ENCODE measurements at regions of chr7 and their contacts with region 1.

Region 1: DNA sequence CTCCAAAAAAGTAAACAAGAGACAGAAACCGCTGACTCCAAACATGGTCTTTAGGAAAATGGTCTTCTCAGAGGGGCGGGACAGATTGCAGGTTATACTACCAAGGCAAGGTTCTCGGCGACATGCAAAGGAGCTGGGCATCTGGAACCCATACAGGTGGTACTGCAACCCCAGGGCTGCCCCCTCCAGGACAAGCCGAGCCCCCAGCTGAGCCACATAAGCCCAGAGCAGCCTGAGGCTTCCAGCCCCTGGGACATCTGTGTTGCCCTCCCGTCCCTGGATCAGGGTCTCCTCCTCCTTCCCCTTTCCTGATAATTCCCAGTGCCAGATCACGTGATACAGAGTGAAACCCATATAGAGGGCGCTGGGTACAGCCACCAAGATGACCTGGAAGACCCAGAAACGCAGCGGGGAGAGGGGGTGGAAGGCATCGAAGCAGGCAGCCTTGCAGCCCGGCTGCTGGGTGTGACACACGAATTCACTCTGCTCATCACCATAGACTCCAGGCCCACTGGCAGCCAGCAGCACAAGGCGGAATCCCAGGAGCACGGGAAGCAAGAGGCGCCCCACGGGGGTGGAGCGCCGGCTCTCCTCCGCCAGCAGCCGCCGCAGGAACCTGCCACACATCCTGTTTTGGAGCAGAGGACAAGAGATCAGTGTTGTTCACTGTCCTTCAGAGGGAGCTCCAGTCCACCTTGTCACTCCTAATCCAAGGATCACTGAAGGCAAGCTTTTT is at the start of gene GJC3:
- DNase-seq: peak; percentile 23
- H3K4me3 Mint-ChIP-seq: peak within 1 kb of the TSS; percentile 64
- H3K27ac Mint-ChIP-seq: peak within 1 kb of the TSS; percentile 10
- H3K4me1 Mint-ChIP-seq: peaks cover 19% of the 10 kb centered on the region
- H3K27me3 Mint-ChIP-seq: peaks cover 35% of the 10 kb centered on the region
- total RNA-seq, gene GJC3: 0.21 TPM in 1 of 2 replicates, not detected in the other

Region 2: GRCh38 chr7:99949638-99950228 is 20.6 kb after region 1 on chr7:
- intact Hi-C with region 1: loop called (anchors 2 kb)
- DNase-seq: no peak
- H3K4me3 Mint-ChIP-seq: no peak overlapping the region
- H3K27ac Mint-ChIP-seq: no peak overlapping the region
- H3K4me1 Mint-ChIP-seq: peaks cover 4% of the 10 kb centered on the region
- H3K27me3 Mint-ChIP-seq: peaks cover 2% of the 10 kb centered on the region

Region 3: GRCh38 chr7:99975782-99976521 is 46.8 kb after region 1 on chr7 and contains the start of gene AZGP1:
- intact Hi-C with region 1: no loop called
- DNase-seq: no peak
- H3K4me3 Mint-ChIP-seq: no peak within 1 kb of the TSS
- H3K27ac Mint-ChIP-seq: no peak within 1 kb of the TSS
- H3K4me1 Mint-ChIP-seq: no peaks in the 10 kb centered on the region
- H3K27me3 Mint-ChIP-seq: peaks cover 9% of the 10 kb centered on the region
- total RNA-seq, gene AZGP1: not detected in 2 replicates